CD4-positive, alpha-beta T cell (primary cell): ENCODE measurements at regions of chr2 and their contacts with region 1.

Region 1: GRCh38 chr2:218395797-218396687 is 3.6 kb upstream of the CTDSP1 start:
- DNase-seq: peak; percentile 88 to 98 (median 93)
- ATAC-seq: peak; percentile 67
- H3K4me3 ChIP-seq: peak overlapping the region; percentile 71
- H3K4me3 Mint-ChIP-seq: peak overlapping the region; percentile 94
- H3K27ac ChIP-seq: peak overlapping the region; percentile 93 to 96
- H3K27ac Mint-ChIP-seq: peak overlapping the region; percentile 99
- H3K4me1 ChIP-seq: peaks cover 58% of the 10 kb centered on the region
- H3K4me1 Mint-ChIP-seq: peaks cover 41% of the 10 kb centered on the region
- H3K27me3 ChIP-seq: no peaks in the 10 kb centered on the region
- H3K27me3 Mint-ChIP-seq: no peaks in the 10 kb centered on the region
- CTCF ChIP-seq: peak; percentile 75

Region 2: DNA sequence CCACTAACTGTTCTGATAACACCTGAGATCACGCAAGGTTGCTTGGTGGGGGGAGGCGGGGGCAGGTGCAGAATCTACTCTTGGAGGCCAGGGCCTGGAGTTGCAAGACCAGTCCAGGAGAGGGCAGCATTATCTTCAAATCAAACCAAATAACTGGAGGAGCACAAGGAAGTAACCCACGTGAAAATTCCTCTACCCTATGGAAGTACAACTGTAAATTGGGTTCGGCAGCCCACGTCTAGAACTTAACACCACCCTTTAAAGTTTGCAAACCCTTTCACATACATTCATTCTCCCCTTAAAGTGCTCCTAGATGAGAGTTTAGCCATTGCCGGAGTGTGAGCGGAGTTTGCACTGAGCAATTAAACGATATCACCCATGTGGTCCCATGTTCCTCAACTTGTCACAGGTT is 209.7 kb before region 1 on chr2:
- CTCF ChIA-PET with region 1: no interaction called
- POLR2A ChIA-PET with region 1: interaction called, 3 read pairs
- intact Hi-C with region 1: loop called in 1 of 2 experiments (anchors 10 kb)
- DNase-seq: peak; percentile 49 to 86 (median 64)
- ATAC-seq: peak; percentile 99
- H3K4me3 ChIP-seq: no peak overlapping the region
- H3K4me3 Mint-ChIP-seq: no peak overlapping the region
- H3K27ac ChIP-seq: no peak overlapping the region
- H3K27ac Mint-ChIP-seq: no peak overlapping the region
- H3K4me1 ChIP-seq: peaks cover 4% of the 10 kb centered on the region
- H3K4me1 Mint-ChIP-seq: peaks cover 6% of the 10 kb centered on the region
- H3K27me3 ChIP-seq: no peaks in the 10 kb centered on the region
- H3K27me3 Mint-ChIP-seq: no peaks in the 10 kb centered on the region
- CTCF ChIP-seq: peak; percentile 88

Region 3: DNA sequence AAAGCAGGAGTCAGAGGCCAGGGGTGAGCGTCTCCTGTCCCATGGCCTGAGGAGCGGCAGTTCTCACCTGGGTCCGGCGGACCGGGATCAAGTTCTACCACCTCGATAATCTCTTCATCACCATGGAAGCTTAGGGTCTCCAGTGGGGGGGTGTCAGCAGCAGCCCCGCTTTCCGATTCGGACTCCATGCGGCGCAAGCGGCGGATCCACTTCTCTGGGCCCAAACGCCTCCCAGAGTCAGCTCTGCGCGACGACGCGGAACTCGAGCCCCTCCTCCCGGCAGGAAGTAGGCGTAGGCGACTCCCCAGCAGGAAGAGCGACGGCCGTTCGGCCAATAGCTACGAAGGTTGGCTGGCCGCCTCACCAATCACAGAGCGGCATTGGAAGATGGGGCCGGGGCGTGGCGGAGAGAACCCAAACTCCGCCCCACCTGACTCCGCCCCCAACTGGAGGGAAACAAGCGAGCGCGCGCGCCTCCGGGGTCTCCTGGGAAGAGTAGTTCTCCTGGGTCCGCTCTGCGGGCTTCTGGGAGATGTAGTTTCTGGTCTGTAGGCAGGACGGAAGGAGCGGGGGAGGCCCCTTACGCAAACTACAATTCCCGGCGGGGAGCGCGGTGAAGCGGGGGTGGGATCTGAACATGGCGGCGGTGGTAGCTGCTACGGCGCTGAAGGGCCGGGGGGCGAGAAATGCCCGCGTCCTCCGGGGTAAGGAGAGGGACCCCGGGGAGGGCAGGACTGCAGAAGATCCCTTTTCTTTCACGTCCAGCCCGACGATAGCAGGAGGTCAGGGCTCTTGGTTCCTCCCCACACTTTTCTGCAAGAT is 125.9 kb before region 1 on chr2 and contains the starts of genes AAMP and PNKD:
- CTCF ChIA-PET with region 1: interaction called, 8 read pairs
- POLR2A ChIA-PET with region 1: interaction called, 68 read pairs
- intact Hi-C with region 1: loop called (anchors 1 kb)
- DNase-seq: peak; percentile 100
- ATAC-seq: peak; percentile 90
- H3K4me3 ChIP-seq: peak within 1 kb of the TSS; percentile 93
- H3K4me3 Mint-ChIP-seq: peak within 1 kb of the TSS; percentile 88
- H3K27ac ChIP-seq: peak within 1 kb of the TSS; percentile 69 to 80
- H3K27ac Mint-ChIP-seq: peak within 1 kb of the TSS; percentile 78
- H3K4me1 ChIP-seq: peaks cover 65% of the 10 kb centered on the region
- H3K4me1 Mint-ChIP-seq: peaks cover 54% of the 10 kb centered on the region
- H3K27me3 ChIP-seq: no peaks in the 10 kb centered on the region
- H3K27me3 Mint-ChIP-seq: no peaks in the 10 kb centered on the region
- CTCF ChIP-seq: peak; percentile 22
- total RNA-seq, gene AAMP: 40.2 to 42.5 TPM
- total RNA-seq, gene PNKD: 9.2 to 10.6 TPM

Region 4: DNA sequence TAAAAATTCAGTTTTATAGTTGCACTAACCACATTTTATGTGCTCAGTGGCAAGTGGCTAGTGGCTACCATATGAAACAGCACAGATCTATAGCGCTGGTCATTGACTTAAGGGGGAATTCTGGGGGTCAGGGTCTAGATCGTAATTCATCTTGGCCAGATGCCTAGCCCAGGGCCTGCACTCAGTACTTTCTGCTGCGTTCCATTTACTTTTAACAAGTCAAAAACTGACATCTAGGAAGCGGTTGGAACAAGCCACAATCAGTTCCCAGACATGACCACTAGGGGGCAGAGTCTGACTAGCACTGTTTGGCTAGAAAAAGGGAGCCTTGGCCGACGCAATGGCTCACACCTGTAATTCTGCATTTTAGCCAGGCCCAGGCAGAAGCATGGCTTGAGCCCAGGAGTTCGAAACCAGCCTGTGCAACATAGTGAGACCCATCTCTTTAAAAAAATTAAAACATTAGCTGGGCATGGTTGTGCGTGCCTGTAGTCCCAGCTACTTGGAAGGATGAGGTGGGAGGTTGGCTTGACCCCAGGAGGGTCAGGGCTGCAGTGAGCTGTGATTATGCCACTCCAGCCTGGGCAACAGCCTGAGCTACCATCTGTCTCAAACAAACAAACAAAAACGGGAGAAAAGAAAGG is 94.7 kb before region 1 on chr2:
- CTCF ChIA-PET with region 1: interaction called, 7 read pairs
- POLR2A ChIA-PET with region 1: interaction called, 6 read pairs
- intact Hi-C with region 1: loop called (anchors 1 kb)
- DNase-seq: peak; percentile 79 to 93 (median 86)
- ATAC-seq: peak; percentile 99
- H3K4me3 ChIP-seq: no peak overlapping the region
- H3K4me3 Mint-ChIP-seq: no peak overlapping the region
- H3K27ac ChIP-seq: no peak overlapping the region
- H3K27ac Mint-ChIP-seq: peak overlapping the region; percentile 4
- H3K4me1 ChIP-seq: peaks cover 8% of the 10 kb centered on the region
- H3K4me1 Mint-ChIP-seq: peaks cover 7% of the 10 kb centered on the region
- H3K27me3 ChIP-seq: no peaks in the 10 kb centered on the region
- H3K27me3 Mint-ChIP-seq: no peaks in the 10 kb centered on the region
- CTCF ChIP-seq: peak; percentile 87

Region 5: DNA sequence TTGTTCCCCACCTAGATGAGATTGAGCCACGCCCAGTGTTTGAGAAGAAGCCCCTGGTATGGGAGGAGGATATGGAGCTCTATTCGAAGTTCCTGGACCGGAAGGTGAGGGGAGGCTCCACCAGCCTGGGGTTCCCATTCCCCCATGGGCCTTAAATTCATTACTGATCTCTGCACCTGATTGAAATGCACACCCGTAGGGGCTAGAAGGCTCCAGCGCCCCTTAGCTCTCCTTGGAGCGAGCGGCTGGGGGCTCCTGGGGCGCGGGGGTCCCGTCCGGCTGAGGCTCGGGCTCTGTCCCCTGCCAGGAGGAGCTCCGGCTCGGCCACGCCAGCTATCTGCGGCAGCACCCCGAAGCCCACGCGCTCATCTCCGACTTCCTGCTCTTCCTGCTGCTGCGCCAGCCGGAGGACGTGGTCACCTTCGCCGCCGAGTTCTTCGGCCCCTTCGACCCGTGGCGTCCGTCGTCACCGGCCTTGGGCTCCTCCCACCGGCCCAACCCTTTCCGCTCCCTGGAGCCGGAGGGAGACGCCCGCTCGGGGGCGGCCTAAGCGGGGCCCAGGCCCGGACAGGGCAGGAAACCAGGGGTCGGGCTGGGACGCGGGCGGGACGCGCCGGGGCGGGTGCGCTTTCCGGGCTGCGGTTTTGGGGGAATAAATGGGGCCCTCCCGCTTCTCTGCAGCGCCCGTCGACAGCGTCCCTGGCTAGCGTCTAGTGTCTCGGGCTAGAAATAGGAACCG is 28.5 kb before region 1 on chr2:
- CTCF ChIA-PET with region 1: interaction called, 8 read pairs
- POLR2A ChIA-PET with region 1: interaction called, 33 read pairs
- intact Hi-C with region 1: loop called in 1 of 2 experiments (anchors 2 kb)
- DNase-seq: peak; percentile 33 to 86 (median 61)
- ATAC-seq: peak; percentile 78
- H3K4me3 ChIP-seq: peak overlapping the region; percentile 64
- H3K4me3 Mint-ChIP-seq: peak overlapping the region; percentile 77
- H3K27ac ChIP-seq: peak overlapping the region; percentile 67 to 74
- H3K27ac Mint-ChIP-seq: peak overlapping the region; percentile 59
- H3K4me1 ChIP-seq: peaks cover 27% of the 10 kb centered on the region
- H3K4me1 Mint-ChIP-seq: peaks cover 41% of the 10 kb centered on the region
- H3K27me3 ChIP-seq: no peaks in the 10 kb centered on the region
- H3K27me3 Mint-ChIP-seq: no peaks in the 10 kb centered on the region
- CTCF ChIP-seq: no peak

Region 6: GRCh38 chr2:218540015-218540414 is 144.0 kb after region 1 on chr2:
- CTCF ChIA-PET with region 1: no interaction called
- POLR2A ChIA-PET with region 1: no interaction called
- intact Hi-C with region 1: no loop called
- DNase-seq: no peak
- ATAC-seq: no peak
- H3K4me3 ChIP-seq: no peak overlapping the region
- H3K4me3 Mint-ChIP-seq: no peak overlapping the region
- H3K27ac ChIP-seq: no peak overlapping the region
- H3K27ac Mint-ChIP-seq: no peak overlapping the region
- H3K4me1 ChIP-seq: no peaks in the 10 kb centered on the region
- H3K4me1 Mint-ChIP-seq: no peaks in the 10 kb centered on the region
- H3K27me3 ChIP-seq: no peaks in the 10 kb centered on the region
- H3K27me3 Mint-ChIP-seq: no peaks in the 10 kb centered on the region
- CTCF ChIP-seq: no peak

Region 7: DNA sequence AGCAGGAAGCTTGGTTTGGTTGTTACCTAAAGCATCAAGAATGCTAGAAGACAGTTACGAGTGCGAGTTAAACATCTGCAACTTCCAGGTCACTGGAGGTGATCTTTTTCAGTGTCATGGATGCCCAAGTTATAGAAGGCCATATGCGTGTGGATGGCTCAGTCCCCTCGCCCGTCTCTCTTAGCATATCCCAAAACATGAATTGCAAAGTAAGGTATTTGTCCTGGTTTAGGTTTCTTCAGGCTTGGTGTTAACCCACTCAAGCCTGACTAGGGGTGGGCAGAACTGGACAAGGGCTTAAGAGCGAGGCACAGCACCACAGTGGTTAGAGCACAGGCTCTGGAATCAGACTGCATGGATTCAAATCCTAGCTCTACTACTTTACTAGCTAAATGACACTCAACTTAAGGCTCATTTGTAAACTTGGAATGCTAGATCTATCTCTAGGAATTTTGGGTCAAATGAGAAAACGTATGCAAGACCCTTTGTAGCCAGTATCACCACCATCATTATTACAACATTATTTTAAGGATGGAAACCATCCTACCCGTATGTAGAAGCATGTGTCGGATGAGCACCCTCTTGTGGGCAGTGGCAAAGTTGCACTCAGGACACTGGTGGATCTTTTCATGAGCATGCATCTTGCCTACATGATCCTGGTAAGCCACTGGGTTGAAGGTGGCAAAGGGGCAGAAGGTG is 252.2 kb after region 1 on chr2:
- CTCF ChIA-PET with region 1: no interaction called
- POLR2A ChIA-PET with region 1: no interaction called
- intact Hi-C with region 1: loop called in 1 of 2 experiments (anchors 2 kb)
- DNase-seq: peak; percentile 25 to 77 (median 42)
- ATAC-seq: peak; percentile 92
- H3K4me3 ChIP-seq: no peak overlapping the region
- H3K4me3 Mint-ChIP-seq: no peak overlapping the region
- H3K27ac ChIP-seq: no peak overlapping the region
- H3K27ac Mint-ChIP-seq: no peak overlapping the region
- H3K4me1 ChIP-seq: peaks cover 8% of the 10 kb centered on the region
- H3K4me1 Mint-ChIP-seq: peaks cover 6% of the 10 kb centered on the region
- H3K27me3 ChIP-seq: no peaks in the 10 kb centered on the region
- H3K27me3 Mint-ChIP-seq: no peaks in the 10 kb centered on the region
- CTCF ChIP-seq: peak; percentile 79

Region 8: DNA sequence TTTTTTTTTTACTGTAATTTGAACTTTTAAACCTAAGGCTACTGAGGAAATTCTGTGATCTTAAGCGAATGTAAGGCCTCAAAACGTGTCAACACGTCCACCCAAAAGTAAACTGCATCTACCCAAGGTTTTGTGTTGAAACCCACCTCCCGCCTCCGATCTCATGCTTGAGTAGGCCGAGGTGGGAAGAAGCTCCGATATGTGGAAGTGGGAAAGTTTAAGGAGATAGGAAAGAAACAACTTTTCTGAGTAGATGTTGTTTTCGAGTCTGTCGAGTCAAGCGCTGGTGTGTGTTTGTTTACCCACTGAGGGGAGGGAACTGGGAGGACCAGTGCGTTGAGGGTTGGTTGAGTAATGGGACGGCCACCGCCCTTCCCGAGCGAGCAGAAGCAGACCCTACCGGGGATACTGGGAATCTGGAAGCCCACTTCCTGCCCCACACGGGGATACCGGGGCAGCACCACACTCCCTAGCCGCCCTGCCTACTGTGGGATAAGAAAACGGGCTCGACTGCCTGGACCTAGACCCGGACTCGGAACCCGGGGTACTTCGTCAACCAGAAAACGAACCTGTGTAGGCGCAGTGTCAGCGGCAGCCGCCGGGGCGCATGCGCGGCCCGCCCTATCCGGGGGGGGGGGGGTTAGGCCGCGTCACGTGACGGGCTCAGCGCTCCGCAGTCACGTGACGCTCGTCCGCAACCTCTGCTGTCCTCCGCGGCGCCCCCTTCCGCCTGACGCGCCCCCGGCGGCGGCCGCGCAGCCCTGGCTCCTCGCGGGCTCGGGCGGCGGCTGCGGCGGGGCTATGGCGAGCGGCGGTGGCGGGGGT is 781.7 kb after region 1 on chr2 and contains the start of gene RETREG2:
- CTCF ChIA-PET with region 1: no interaction called
- POLR2A ChIA-PET with region 1: no interaction called
- intact Hi-C with region 1: loop called (anchors 5 to 10 kb)
- DNase-seq: peak; percentile 67 to 96 (median 78)
- ATAC-seq: peak; percentile 66
- H3K4me3 ChIP-seq: peak within 1 kb of the TSS; percentile 90
- H3K4me3 Mint-ChIP-seq: peak within 1 kb of the TSS; percentile 94
- H3K27ac ChIP-seq: peak within 1 kb of the TSS; percentile 97 to 99
- H3K27ac Mint-ChIP-seq: peak within 1 kb of the TSS; percentile 99
- H3K4me1 ChIP-seq: peaks cover 89% of the 10 kb centered on the region
- H3K4me1 Mint-ChIP-seq: peaks cover 72% of the 10 kb centered on the region
- H3K27me3 ChIP-seq: no peaks in the 10 kb centered on the region
- H3K27me3 Mint-ChIP-seq: no peaks in the 10 kb centered on the region
- CTCF ChIP-seq: no peak
- total RNA-seq, gene RETREG2: 82.3 to 83.2 TPM